IMR-90 (cell line): ENCODE measurements at regions of chr16 and their contacts with region 1.

Region 1: GRCh38 chr16:66872943-66873684 is 7.2 kb upstream of the PDP2 start:
- DNase-seq: peak; percentile 100
- ATAC-seq: peak; percentile 91
- H3K4me3 ChIP-seq: peak overlapping the region; percentile 18
- H3K27ac ChIP-seq: peak overlapping the region; percentile 52
- H3K4me1 ChIP-seq: peaks cover 12% of the 10 kb centered on the region
- H3K27me3 ChIP-seq: no peaks in the 10 kb centered on the region
- CTCF ChIP-seq: peak; percentile 98
- POLR2A ChIP-seq: no peak
- RAD21 ChIP-seq: peak; percentile 69

Region 2: GRCh38 chr16:66623755-66624154 is 249.4 kb before region 1 on chr16:
- CTCF ChIA-PET with region 1: no interaction called
- POLR2A ChIA-PET with region 1: no interaction called
- dilution Hi-C with region 1: no loop called
- in situ Hi-C with region 1: no loop called
- intact Hi-C with region 1: no loop called
- DNase-seq: no peak
- ATAC-seq: no peak
- H3K4me3 ChIP-seq: no peak overlapping the region
- H3K27ac ChIP-seq: no peak overlapping the region
- H3K4me1 ChIP-seq: peaks cover 15% of the 10 kb centered on the region
- H3K27me3 ChIP-seq: no peaks in the 10 kb centered on the region
- CTCF ChIP-seq: no peak
- POLR2A ChIP-seq: no peak
- RAD21 ChIP-seq: no peak

Region 3: DNA sequence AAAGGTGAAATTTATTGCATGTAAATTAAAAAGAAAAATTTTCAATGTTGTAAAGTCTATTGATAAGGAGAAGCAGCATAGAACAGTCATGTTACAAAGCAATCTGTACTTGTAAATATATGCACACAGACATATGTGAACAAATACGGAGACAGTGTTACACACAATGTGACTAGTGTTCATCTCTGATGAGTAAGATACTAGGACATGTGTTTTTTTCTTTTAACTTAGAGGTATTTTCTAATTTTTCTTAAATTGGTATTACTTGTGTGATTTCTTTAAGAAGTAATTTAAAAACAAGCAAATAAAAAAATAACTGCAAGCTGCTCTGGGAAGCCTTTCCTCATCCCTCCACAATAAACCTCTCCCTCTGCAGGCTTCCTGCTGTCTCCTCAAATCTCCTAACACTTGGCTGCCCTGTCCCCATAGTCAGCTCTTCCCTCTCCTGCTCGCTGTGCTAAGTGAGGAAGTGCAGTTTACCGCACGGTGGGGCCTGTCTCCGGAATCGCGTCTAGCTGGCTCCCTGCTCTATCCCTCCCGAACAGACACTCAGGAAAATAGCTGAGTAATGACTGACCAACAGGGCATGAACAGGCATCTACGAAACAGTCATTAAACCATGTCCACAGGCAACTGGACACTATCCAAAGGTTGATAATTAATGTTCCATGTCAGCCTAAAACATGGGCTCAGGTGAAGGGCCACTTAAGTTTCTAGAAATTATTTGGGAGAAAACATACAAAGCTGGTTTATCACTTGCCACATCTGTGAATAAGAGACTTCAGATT is 212.5 kb before region 1 on chr16:
- CTCF ChIA-PET with region 1: no interaction called
- POLR2A ChIA-PET with region 1: no interaction called
- dilution Hi-C with region 1: no loop called
- in situ Hi-C with region 1: no loop called
- intact Hi-C with region 1: loop called (anchors 5 kb)
- DNase-seq: peak; percentile 84
- ATAC-seq: peak; percentile 96
- H3K4me3 ChIP-seq: no peak overlapping the region
- H3K27ac ChIP-seq: peak overlapping the region; percentile 41; the same call in 1 of the 2 replicates
- H3K4me1 ChIP-seq: peaks cover 8% of the 10 kb centered on the region
- H3K27me3 ChIP-seq: no peaks in the 10 kb centered on the region
- CTCF ChIP-seq: peak; percentile 38
- POLR2A ChIP-seq: no peak
- RAD21 ChIP-seq: peak; percentile 41

Region 4: GRCh38 chr16:66728117-66728787 is 144.9 kb before region 1 on chr16:
- CTCF ChIA-PET with region 1: no interaction called
- POLR2A ChIA-PET with region 1: no interaction called
- dilution Hi-C with region 1: no loop called
- in situ Hi-C with region 1: no loop called
- intact Hi-C with region 1: loop called (anchors 5 kb)
- DNase-seq: peak; percentile 67
- ATAC-seq: peak; percentile 85
- H3K4me3 ChIP-seq: no peak overlapping the region
- H3K27ac ChIP-seq: no peak overlapping the region
- H3K4me1 ChIP-seq: no peaks in the 10 kb centered on the region; the same call in 1 of the 2 replicates
- H3K27me3 ChIP-seq: no peaks in the 10 kb centered on the region
- CTCF ChIP-seq: peak; percentile 59
- POLR2A ChIP-seq: no peak
- RAD21 ChIP-seq: peak; percentile 47

Region 5: DNA sequence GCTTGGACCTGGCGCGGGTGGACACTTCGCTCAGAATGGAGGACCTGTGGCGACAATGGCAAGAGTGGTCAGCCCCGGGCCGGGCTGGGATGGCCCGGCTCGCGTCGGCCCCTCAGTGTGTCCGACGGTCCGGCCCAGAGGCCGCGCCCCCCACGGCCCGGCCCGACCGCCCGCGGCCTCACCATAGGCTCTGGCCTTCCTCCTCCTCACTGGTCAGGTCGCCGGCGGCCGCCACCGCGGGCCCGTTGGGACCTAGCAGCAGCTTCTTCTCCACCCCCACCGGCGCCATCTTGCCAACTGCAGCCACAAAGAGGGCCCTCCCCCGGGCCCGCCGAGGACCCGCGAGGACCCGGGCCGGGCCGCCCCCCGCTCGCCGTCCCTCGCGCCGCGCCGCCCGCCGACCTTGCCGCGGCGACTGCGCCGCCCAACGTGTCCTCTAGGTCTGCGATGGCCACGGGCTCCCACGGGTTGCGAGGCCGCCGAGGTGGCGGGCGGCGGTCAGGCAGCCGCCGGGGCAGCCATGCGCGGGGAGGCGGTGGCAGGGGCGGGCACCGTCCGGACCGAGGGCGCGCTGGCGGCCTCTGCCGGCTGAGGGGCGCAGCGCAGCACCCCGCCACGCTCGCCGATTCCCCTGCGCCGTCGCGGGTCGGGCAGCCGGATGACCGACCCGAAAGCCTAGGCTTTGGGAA is 121.7 kb before region 1 on chr16 and contains the start of gene DYNC1LI2:
- CTCF ChIA-PET with region 1: interaction called, 4 read pairs
- POLR2A ChIA-PET with region 1: no interaction called
- dilution Hi-C with region 1: no loop called
- in situ Hi-C with region 1: no loop called
- intact Hi-C with region 1: loop called (anchors 5 kb)
- DNase-seq: peak; percentile 58
- ATAC-seq: peak; percentile 98
- H3K4me3 ChIP-seq: peak within 1 kb of the TSS; percentile 90
- H3K27ac ChIP-seq: peak within 1 kb of the TSS; percentile 99
- H3K4me1 ChIP-seq: peaks cover 4% of the 10 kb centered on the region
- H3K27me3 ChIP-seq: peaks cover 5% of the 10 kb centered on the region
- CTCF ChIP-seq: peak; percentile 90
- POLR2A ChIP-seq: no peak
- RAD21 ChIP-seq: peak; percentile 38
- total RNA-seq, gene DYNC1LI2: 88.4 and 98.9 TPM in 2 replicates

Region 6: DNA sequence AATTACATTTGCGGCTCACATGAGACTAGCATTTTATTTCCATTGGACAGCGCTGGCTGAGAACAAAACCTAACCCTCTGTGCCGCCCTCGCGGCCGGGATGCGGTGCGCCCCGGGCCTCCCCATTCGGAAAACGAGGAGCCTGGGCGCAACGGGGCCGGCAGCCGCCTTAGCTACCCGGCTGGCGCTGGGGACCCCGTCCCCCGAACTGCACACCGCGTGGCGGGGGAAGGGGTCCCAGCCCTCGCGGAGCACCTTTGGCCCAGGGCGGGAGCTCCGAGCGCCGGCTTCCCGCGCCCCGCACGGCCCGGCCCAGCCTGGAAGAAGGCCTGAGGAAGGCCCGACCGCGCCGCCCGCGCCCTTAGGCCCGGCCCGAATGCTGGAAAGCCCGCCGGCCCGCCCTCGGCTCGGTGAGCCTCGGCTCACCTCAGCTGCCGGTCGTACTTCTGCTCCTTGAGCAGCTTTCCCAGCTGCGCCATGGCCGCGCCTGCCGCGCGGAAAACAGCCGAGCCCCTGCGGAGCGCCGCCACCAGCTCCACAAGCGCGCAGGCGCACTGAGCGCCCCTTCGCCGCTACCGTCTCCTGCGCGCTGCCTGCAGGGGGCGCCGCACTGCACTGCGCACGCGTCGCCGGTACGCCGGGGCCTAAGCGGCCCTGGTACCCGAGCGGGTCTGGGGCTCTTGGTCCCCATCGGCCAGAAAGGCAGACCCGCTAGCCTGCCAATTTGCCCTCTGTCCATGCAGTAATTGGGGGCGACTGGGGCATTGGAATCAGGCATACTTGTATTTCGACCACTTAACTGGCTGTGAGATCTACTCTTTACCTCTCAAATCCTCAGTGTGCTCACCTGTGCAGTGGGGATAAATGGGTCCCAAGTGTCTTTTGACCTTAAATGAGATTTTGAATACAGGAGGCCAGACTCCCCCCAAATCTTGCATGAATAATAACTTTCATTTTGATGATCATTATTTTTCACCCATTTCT is 42.4 kb before region 1 on chr16 and contains the start of gene NAE1:
- CTCF ChIA-PET with region 1: interaction called, 22 read pairs
- POLR2A ChIA-PET with region 1: interaction called, 3 read pairs
- dilution Hi-C with region 1: no loop called
- in situ Hi-C with region 1: no loop called
- intact Hi-C with region 1: loop called (anchors 1 kb)
- DNase-seq: peak; percentile 81
- ATAC-seq: peak; percentile 99
- H3K4me3 ChIP-seq: peak within 1 kb of the TSS; percentile 75
- H3K27ac ChIP-seq: peak within 1 kb of the TSS; percentile 57
- H3K4me1 ChIP-seq: peaks cover 12% of the 10 kb centered on the region
- H3K27me3 ChIP-seq: no peaks in the 10 kb centered on the region
- CTCF ChIP-seq: peak; percentile 98
- POLR2A ChIP-seq: peak; percentile 77
- RAD21 ChIP-seq: peak; percentile 54
- total RNA-seq, gene NAE1: 36.7 and 49.4 TPM in 2 replicates